ENCODE measurements at regions of chr6 and their contacts with region 1.

Region 1: DNA sequence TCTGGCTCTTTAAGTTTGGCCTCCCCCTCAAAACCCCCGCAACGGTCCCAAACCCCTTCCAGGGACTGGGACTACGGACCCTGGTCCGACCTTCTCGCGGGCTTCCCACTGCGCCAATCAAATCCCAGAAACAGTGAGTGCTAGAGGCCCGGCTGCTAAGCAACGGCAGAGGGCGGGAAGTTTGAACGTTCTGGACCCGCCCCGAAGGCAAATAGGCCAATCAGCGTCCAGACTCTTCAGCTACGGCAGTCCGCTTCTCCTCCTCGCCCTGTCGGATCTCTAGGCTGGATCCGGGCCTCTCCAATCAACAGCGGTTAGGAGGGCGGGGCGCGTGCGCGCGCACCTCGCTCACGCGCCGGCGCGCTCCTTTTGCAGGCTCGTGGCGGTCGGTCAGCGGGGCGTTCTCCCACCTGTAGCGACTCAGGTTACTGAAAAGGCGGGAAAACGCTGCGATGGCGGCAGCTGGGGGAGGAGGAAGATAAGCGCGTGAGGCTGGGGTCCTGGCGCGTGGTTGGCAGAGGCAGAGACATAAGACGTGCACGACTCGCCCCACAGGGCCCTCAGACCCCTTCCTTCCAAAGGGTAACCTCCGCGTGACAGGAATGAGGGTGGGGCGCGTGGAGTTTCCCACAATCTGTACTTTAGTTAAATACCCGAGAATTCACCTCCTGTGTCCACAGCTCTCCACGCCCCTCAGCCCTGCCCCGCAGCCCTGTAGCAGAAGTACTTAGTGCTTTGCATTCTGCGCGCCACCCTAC is at the start of gene MSH5:
- DNase-seq: peak; percentile 100
- ATAC-seq: peak; percentile 74
- H3K4me3 ChIP-seq: peak within 1 kb of the TSS; percentile 44 to 92 (median 92)
- H3K27ac ChIP-seq: peak within 1 kb of the TSS; percentile 99
- H3K4me1 ChIP-seq: peaks cover 50% of the 10 kb centered on the region
- H3K27me3 ChIP-seq: no peaks in the 10 kb centered on the region; a peak in 1 of 5 replicates
- CTCF ChIP-seq: no peak
- EP300 ChIP-seq: no peak; a peak in 1 of 4 replicates
- POLR2A ChIP-seq: peak in 1 of 2 experiments; percentile 45; a peak in 2 of 4 replicates
- RAD21 ChIP-seq: peak; percentile 51
- total RNA-seq, gene MSH5: 2.5 and 10.2 TPM in 2 replicates

Region 2: DNA sequence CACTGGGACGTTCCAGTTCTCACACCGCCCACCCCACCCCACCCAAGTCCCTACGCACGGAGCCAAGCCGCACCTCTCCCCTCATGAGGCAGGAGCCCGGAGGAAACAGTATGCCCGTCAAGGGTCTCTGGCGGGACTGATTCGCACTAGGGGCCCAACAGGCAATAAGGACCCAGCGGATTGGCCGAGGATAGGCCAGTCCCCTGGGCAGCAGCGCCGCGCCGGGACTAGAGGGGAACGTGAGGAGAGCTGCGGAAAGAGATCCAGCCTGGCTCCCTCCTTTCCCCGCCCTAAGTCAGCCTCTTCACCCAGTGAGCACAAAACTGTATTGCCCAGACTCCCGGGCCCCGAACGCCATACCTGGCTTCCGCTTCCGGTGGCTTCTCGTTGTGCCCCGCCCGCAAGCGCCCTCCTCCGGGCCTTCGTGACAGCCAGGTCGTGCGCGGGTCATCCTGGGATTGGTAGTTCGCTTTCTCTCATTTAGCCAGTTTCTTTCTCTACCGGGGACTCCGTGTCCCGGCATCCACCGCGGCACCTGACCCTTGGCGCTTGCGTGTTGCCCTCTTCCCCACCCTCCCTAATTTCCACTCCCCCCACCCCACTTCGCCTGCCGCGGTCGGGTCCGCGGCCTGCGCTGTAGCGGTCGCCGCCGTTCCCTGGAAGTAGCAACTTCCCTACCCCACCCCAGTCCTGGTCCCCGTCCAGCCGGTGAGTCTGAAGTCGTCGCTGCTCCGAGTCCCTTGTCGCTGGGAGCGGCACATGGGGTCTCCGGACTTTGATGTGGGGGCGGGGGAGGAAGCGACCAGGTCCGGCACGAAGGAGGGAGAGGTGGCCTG is 74.1 kb before region 1 on chr6 and contains the start of gene CSNK2B:
- CTCF ChIA-PET with region 1: no interaction called
- POLR2A ChIA-PET with region 1: interaction called, 44 read pairs
- in situ Hi-C with region 1: no loop called
- intact Hi-C with region 1: loop called (anchors 1 kb)
- DNase-seq: peak; percentile 99
- ATAC-seq: peak; percentile 83
- H3K4me3 ChIP-seq: peak within 1 kb of the TSS; percentile 93 to 98 (median 94)
- H3K27ac ChIP-seq: peak within 1 kb of the TSS; percentile 99
- H3K4me1 ChIP-seq: peaks cover 71% of the 10 kb centered on the region
- H3K27me3 ChIP-seq: no peaks in the 10 kb centered on the region; a peak in 1 of 5 replicates
- CTCF ChIP-seq: peak; percentile 21
- EP300 ChIP-seq: 0 out of 4 replicates have a peak, but pooled peaks of 1 of the 2 experiments have one; percentile 1
- POLR2A ChIP-seq: peak in 1 of 2 experiments; percentile 98; a peak in 2 of 4 replicates
- RAD21 ChIP-seq: peak; percentile 8; the same call in 1 of the 2 replicates
- total RNA-seq, gene CSNK2B: 296 and 316 TPM in 2 replicates

Region 3: DNA sequence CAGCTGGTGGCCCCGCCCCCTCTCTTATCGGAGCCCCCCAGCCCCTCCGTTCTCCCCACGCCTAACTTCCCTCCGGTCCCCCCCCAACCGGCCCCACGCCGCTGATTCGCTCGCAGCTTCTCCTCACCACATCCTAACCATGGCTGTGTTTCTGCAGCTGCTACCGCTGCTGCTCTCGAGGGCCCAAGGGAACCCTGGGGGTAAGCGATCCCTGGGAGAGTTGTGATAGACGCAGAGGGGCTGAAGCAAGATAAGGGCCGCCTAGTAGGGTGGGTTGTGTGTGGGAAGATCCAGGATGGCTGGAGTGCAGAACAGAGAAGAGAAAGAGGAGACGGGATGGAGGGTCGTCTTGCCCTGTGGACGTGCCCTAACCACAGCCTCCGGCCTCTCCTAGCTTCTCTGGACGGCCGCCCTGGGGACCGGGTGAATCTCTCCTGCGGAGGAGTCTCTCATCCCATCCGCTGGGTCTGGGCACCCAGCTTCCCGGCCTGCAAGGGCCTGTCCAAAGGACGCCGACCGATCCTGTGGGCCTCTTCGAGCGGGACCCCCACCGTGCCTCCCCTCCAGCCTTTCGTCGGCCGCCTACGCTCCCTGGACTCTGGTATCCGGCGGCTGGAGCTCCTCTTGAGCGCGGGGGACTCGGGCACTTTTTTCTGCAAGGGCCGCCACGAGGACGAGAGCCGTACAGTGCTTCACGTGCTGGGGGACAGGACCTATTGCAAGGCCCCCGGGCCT is 16.4 kb before region 1 on chr6 and contains the start of gene MPIG6B:
- CTCF ChIA-PET with region 1: no interaction called
- POLR2A ChIA-PET with region 1: interaction called, 122 read pairs
- in situ Hi-C with region 1: no loop called
- intact Hi-C with region 1: no loop called
- DNase-seq: no peak
- ATAC-seq: peak; percentile 7
- H3K4me3 ChIP-seq: no peak within 1 kb of the TSS
- H3K27ac ChIP-seq: no peak within 1 kb of the TSS
- H3K4me1 ChIP-seq: no peaks in the 10 kb centered on the region
- H3K27me3 ChIP-seq: peaks cover 2 to 35% of the 10 kb centered on the region in 2 experiments; a peak in 4 of 5 replicates
- CTCF ChIP-seq: no peak
- EP300 ChIP-seq: no peak
- POLR2A ChIP-seq: no peak
- RAD21 ChIP-seq: no peak
- total RNA-seq, gene MPIG6B: not detected in 2 replicates

Region 4: GRCh38 chr6:31769684-31770371 is 30.0 kb after region 1 on chr6:
- CTCF ChIA-PET with region 1: interaction called, 3 read pairs
- POLR2A ChIA-PET with region 1: interaction called, 279 read pairs
- in situ Hi-C with region 1: no loop called
- intact Hi-C with region 1: no loop called
- DNase-seq: peak; percentile 71
- ATAC-seq: peak; percentile 61
- H3K4me3 ChIP-seq: no peak overlapping the region
- H3K27ac ChIP-seq: no peak overlapping the region
- H3K4me1 ChIP-seq: peaks cover 44% of the 10 kb centered on the region
- H3K27me3 ChIP-seq: no peaks in the 10 kb centered on the region
- CTCF ChIP-seq: peak; percentile 98
- EP300 ChIP-seq: no peak
- POLR2A ChIP-seq: no peak
- RAD21 ChIP-seq: peak; percentile 96

Region 5: DNA sequence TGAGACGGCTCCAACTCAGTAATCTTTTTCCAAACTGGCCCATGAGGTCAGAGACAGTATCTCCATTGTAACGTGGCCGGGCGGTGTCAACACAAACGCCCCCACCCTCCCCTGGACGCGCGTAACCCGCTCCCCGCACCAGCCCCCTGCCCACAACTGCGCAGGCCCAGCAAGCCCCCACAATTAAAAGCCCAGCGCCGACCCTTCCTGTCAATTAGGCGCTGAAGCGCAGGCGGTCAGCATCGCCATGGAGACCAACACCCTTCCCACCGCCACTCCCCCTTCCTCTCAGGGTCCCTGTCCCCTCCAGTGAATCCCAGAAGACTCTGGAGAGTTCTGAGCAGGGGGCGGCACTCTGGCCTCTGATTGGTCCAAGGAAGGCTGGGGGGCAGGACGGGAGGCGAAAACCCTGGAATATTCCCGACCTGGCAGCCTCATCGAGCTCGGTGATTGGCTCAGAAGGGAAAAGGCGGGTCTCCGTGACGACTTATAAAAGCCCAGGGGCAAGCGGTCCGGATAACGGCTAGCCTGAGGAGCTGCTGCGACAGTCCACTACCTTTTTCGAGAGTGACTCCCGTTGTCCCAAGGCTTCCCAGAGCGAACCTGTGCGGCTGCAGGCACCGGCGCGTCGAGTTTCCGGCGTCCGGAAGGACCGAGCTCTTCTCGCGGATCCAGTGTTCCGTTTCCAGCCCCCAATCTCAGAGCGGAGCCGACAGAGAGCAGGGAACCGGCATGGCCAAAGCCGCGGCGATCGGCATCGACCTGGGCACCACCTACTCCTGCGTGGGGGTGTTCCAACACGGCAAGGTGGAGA is 75.4 kb after region 1 on chr6 and contains the starts of genes HSPA1A and HSPA1L:
- CTCF ChIA-PET with region 1: no interaction called
- POLR2A ChIA-PET with region 1: interaction called, 25 read pairs
- in situ Hi-C with region 1: no loop called
- intact Hi-C with region 1: no loop called
- DNase-seq: peak; percentile 95
- ATAC-seq: peak; percentile 64
- H3K4me3 ChIP-seq: peak within 1 kb of the TSS; percentile 54 to 71 (median 55)
- H3K27ac ChIP-seq: peak within 1 kb of the TSS; percentile 95
- H3K4me1 ChIP-seq: peaks cover 35% of the 10 kb centered on the region
- H3K27me3 ChIP-seq: no peaks in the 10 kb centered on the region
- CTCF ChIP-seq: no peak
- EP300 ChIP-seq: peak in 1 of 2 experiments; percentile 63; a peak in 2 of 4 replicates
- POLR2A ChIP-seq: peak; percentile 99 to 100
- RAD21 ChIP-seq: peak; percentile 22; the same call in 1 of the 2 replicates
- total RNA-seq, gene HSPA1A: 83.5 and 85.0 TPM in 2 replicates
- total RNA-seq, gene HSPA1L: 0.55 and 0.94 TPM in 2 replicates

Region 6: GRCh38 chr6:31851485-31851832 is 111.6 kb after region 1 on chr6:
- CTCF ChIA-PET with region 1: no interaction called
- POLR2A ChIA-PET with region 1: interaction called, 10 read pairs
- in situ Hi-C with region 1: no loop called
- intact Hi-C with region 1: no loop called
- DNase-seq: no peak
- ATAC-seq: peak; percentile 9
- H3K4me3 ChIP-seq: no peak overlapping the region
- H3K27ac ChIP-seq: peak overlapping the region; percentile 43
- H3K4me1 ChIP-seq: peaks cover 35% of the 10 kb centered on the region
- H3K27me3 ChIP-seq: no peaks in the 10 kb centered on the region
- CTCF ChIP-seq: no peak
- EP300 ChIP-seq: no peak
- POLR2A ChIP-seq: no peak
- RAD21 ChIP-seq: no peak